Cardiac septum (tissue), 1 donor: ENCODE measurements at regions of chr13 and their contacts with region 1.

Region 1: DNA sequence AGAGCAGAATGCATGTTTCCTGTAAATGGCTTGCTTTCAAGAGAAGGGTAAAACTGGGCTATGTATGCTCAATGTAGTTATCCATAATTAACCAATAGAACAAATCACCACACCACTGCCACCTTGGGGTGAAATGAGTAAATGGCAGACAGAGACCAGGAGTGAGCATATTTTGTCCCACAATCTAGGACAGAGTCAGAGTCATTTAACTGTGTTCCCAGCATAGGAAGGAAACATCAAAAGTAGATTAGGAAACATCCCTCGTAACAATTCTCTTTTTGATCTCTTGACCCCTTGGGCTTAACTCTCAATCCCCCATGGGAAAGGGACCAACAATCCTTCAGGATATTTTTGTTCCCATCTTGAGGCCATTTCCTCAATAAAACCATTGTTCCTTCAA is 224.8 kb downstream of the NHLRC3 start:
- DNase-seq: no peak

Region 2: DNA sequence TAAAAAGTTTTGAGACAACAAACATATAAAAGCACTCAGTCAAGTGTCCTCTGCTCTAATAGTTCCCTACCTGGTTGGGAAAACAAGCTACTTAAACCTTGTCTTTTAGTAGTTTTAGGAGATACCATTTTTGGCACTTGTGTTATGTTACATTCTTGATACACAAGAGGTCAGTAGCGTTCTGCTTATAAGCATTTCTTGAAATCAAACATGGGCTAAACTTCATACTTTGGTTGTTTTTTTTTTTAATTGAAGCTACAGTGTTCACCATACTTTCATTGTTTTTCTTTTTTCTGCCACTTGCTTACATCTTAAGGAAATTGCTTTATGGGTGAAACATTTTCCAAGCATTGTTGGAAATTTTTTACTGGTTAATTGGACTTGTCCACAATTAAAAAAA is 211.9 kb before region 1 on chr13:
- intact Hi-C with region 1: loop called (anchors 5 kb)
- DNase-seq: no peak

Region 3: DNA sequence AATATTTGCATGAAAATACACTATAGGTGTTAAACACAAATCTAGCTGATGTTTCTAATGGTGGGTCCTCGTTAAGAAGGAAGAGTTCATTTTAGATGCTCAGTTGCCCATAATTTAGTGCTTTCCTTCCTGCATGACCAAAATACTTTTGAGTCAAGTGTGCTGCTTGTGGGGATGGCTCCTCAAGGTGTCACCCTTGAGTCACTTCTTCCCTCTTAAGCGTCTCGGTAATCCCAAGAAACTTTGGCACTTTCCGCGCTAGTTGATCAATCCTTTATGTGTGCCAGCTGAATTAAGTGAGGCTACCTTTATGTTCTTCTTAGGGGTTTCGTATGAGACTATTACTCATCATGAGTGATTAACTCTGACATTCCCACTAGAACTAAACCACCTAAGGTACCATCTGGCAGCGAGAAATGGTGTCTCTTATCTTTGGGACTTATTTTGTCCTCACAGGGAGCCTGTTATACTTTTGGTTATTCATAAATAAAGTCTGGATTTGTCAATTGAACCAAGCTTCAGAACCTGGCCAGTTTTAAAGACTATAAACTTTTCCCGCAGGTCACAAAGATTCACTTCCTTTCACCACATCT is 118.0 kb before region 1 on chr13:
- intact Hi-C with region 1: loop called (anchors 2 kb)
- DNase-seq: no peak

Region 4: GRCh38 chr13:39196958-39197646 is 65.9 kb before region 1 on chr13:
- intact Hi-C with region 1: loop called (anchors 5 kb)
- DNase-seq: no peak

Region 5: GRCh38 chr13:39415008-39415802 is 152.2 kb after region 1 on chr13:
- intact Hi-C with region 1: loop called (anchors 5 kb)
- DNase-seq: no peak

Region 6: DNA sequence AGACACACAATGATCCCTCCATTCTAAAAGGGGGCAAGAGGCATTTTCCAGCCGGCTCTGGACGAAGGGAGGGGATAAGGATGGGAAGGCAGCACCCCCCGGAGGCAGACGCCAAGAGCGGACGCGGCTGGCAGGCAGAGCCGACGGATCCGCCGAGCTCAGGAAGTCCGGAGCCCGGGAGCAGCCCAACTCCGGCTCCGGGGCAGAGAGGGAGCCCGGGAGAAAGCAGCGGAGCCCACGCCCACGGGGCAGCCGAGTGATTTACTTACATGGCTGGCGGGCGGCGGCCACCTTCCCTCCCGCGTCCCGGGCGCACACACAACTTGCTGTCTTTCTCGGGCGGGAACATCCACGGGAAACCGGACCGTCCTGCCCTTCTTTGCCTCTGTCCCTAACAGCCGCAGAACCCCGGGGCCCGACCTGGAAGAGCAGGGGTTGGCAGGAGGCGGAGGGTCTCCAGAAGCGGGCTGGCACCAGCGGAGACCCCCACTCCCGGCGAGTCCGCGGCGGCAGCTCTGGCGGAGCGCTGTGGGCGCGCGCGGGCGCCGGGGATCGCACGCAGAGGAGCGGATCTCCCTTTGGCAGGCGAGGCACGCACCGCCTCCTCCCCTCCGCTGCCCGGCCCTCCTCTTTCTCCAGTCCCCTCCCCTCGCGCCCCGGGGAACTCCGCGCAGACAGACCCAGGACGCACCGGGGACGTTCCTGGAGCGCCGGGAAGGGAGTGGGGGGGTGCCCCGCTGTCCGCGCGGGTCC is 339.8 kb after region 1 on chr13 and contains the start of gene LHFPL6:
- intact Hi-C with region 1: loop called (anchors 2 kb)
- DNase-seq: peak; percentile 93
- total RNA-seq, gene LHFPL6: 68.9 TPM